ENCODE measurements at regions of chr16 and their contacts with region 1.

Region 1: DNA sequence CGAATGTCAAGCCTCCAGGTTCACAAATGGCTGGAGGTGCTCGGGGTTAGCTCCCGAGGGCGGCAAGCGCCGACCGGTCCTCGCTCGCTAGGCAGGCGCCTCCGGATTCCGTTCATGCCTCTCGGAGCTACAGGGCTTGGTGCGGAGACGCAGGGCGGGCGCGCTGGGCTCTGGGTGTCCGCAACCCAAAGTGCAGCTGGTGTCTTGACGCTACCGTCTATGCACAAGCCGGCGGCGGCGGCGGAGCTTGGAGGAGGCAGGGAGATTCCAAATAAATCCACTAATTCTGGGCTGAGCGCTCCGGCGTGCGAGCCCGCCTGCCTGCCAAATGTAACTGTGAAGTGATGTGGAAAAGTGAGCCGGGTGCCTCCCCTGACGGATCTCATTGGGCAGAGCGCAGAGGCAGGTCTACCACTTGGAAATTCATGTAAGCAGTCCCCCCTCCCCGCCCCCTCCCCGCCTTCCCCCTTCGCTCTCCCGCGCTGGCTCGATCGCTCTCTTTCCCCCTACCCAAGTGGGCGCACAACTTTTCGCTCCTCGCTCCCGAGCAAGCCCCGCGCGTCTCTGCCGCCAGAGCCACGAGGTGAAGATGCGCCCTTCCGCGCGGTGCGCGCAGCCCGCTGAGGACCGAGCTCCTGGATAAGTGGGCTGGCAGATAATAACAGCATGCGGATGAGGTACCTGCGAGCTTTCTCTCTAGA is at the start of gene CDH8:
- DNase-seq: peak in 9 of 10 donors; percentile 52 to 77 (median 69)
- H3K4me3 ChIP-seq: peak within 1 kb of the TSS; percentile 54 to 90 (median 73)
- H3K27ac ChIP-seq: peak within 1 kb of the TSS; percentile 8 to 95 (median 83)
- H3K27me3 ChIP-seq: peaks cover 0 to 31% (median 0%) of the 10 kb centered on the region in 45 donors
- CTCF ChIP-seq: no peak
- total RNA-seq, gene CDH8: 21.9 to 108 (median 64.7) TPM

Region 2: GRCh38 chr16:61862221-61863155 is 173.8 kb before region 1 on chr16:
- intact Hi-C with region 1: loop called (anchors 5 to 10 kb)
- DNase-seq: peak in 1 of 10 donors; percentile 14
- H3K4me3 ChIP-seq: peak overlapping the region in 41 of 59 donors; percentile 1 to 59 (median 34)
- H3K27ac ChIP-seq: peak overlapping the region; percentile 13 to 98 (median 91)
- H3K27me3 ChIP-seq: no peaks in the 10 kb centered on the region
- CTCF ChIP-seq: peak in 2 of 56 donors; percentile 10 to 17

Region 3: DNA sequence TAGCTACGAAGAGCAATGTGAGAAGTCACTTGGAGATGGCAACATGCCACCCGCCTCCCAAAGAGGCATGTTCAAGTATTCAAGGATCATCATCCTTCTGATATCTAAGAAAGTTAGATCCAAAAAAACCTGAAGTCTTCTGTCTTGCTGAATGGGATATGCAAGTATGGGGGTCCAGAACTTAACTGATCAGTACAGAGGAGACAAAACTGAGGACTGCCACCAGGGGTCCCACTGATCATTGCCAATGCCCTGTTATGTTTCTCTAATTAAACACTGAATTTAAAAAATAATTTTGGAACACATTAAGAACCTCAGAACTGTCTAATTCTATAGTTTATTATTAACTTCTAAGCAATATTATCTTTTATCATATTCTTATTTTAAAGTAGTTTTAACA is 99.7 kb before region 1 on chr16:
- intact Hi-C with region 1: loop called in 1 of 2 experiments (anchors 10 kb)
- DNase-seq: peak in 4 of 10 donors; percentile 10 to 52 (median 42)
- H3K4me3 ChIP-seq: no peak overlapping the region
- H3K27ac ChIP-seq: no peak overlapping the region
- H3K27me3 ChIP-seq: no peaks in the 10 kb centered on the region
- CTCF ChIP-seq: peak in 53 of 56 donors; percentile 20 to 69 (median 52)

Region 4: DNA sequence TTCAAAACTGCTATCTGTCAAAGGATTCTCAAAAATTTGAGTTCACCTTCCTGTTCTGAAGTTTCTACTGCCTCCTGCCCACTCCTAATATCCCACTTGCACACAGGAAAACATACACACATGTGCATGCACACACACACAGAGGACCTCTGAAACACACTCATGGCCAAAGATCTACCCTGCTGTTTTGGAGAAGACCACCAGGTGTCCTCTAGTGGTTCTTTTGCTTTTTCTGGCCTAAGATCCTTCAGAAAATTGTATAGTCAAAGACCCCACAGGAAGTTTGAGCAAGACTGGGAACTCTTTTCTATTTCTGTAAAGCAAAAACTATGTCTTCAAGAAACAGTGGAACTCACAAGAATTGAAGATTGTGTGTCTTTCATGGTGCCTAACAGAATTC is 90.2 kb before region 1 on chr16:
- intact Hi-C with region 1: loop called in 1 of 2 experiments (anchors 5 kb)
- DNase-seq: no peak
- H3K4me3 ChIP-seq: peak overlapping the region in 29 of 59 donors; percentile 3 to 44 (median 23)
- H3K27ac ChIP-seq: peak overlapping the region in 6 of 59 donors; percentile 5 to 59 (median 38)
- H3K27me3 ChIP-seq: peaks cover 0 to 3% (median 0%) of the 10 kb centered on the region in 45 donors
- CTCF ChIP-seq: peak in 19 of 56 donors; percentile 8 to 36 (median 14)

Measured in dorsolateral prefrontal cortex (tissue), 120 donors.